Activated B cell treated with CpG ODN at 0.5 μM for 24 hours (primary cell): ENCODE measurements at regions of chr15 and their contacts with region 1.

Region 1: GRCh38 chr15:57100136-57100539 is 181.7 kb downstream of the TCF12 start:
- DNase-seq: no peak
- ATAC-seq: peak; percentile 78
- H3K4me3 Mint-ChIP-seq: peak overlapping the region; percentile 64
- H3K27ac Mint-ChIP-seq: peak overlapping the region; percentile 83
- H3K4me1 Mint-ChIP-seq: peaks cover 50% of the 10 kb centered on the region
- H3K27me3 Mint-ChIP-seq: no peaks in the 10 kb centered on the region
- CTCF ChIP-seq: no peak

Region 2: DNA sequence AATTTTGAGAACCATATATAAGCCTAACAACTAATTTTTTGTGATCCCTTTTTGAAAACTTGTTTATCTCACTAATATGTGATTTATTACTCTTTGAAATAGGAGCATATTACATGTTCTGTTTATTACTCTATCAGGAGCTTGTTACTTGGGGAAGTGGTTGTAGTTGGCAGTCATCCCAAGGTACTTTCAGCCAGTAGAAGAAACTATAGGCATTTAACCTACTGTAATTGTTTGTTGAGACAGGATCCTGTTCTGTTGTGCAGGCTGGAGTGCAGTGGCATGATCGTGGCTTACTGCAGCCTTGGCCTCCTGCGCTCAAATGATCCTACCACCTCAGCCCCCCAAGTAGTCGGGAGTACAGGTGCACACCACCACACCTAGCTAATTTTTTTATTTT is 13.9 kb after region 1 on chr15:
- CTCF ChIA-PET with region 1: no interaction called
- POLR2A ChIA-PET with region 1: interaction called, 3 read pairs
- intact Hi-C with region 1: loop called (anchors 1 kb)
- DNase-seq: no peak
- ATAC-seq: no peak
- H3K4me3 Mint-ChIP-seq: no peak overlapping the region
- H3K27ac Mint-ChIP-seq: no peak overlapping the region
- H3K4me1 Mint-ChIP-seq: peaks cover 25% of the 10 kb centered on the region
- H3K27me3 Mint-ChIP-seq: no peaks in the 10 kb centered on the region
- CTCF ChIP-seq: no peak

Region 3: DNA sequence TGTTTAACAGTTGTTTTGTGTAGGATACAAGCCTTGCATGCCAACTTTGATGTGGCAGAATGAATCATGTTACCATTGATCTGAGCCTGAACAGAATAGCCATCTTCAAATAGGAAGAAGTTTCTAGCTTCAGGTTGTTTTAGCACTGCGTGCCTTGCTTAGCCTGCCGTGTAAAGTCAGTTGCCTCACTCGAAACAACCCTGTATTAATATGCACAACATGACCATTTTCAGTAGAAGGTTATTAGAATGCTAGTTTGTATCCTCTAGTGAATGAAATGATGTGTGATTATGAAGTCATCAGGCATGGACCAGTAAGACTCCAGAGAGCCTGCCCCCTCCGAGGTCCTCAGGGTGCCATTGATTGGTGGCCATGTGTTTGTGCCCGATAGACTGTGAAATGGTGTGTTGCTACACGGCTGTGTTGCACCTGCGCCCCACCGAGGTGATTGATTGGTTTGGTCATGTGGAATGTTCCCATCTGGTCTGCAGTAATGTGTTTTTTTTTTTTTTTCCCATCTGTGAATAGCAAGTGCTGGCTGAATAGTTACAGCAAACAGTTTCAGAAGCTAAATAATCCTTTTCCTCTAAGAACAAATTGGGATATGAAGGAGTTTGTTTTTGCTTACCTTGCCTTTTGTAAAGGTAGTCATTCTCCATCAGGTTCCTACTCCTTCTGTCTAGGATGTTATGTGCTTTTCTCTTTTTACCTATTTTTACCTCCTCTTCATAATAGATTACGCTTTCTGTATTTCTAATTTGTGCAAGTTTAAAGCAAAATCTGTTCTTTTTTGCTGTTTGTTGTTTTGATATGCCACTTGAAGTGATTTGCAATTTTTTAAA is 33.2 kb after region 1 on chr15:
- CTCF ChIA-PET with region 1: no interaction called
- POLR2A ChIA-PET with region 1: no interaction called
- intact Hi-C with region 1: loop called (anchors 5 kb)
- DNase-seq: no peak
- ATAC-seq: peak; percentile 61
- H3K4me3 Mint-ChIP-seq: peak overlapping the region; percentile 12
- H3K27ac Mint-ChIP-seq: peak overlapping the region; percentile 54
- H3K4me1 Mint-ChIP-seq: peaks cover 30% of the 10 kb centered on the region
- H3K27me3 Mint-ChIP-seq: no peaks in the 10 kb centered on the region
- CTCF ChIP-seq: no peak

Region 4: DNA sequence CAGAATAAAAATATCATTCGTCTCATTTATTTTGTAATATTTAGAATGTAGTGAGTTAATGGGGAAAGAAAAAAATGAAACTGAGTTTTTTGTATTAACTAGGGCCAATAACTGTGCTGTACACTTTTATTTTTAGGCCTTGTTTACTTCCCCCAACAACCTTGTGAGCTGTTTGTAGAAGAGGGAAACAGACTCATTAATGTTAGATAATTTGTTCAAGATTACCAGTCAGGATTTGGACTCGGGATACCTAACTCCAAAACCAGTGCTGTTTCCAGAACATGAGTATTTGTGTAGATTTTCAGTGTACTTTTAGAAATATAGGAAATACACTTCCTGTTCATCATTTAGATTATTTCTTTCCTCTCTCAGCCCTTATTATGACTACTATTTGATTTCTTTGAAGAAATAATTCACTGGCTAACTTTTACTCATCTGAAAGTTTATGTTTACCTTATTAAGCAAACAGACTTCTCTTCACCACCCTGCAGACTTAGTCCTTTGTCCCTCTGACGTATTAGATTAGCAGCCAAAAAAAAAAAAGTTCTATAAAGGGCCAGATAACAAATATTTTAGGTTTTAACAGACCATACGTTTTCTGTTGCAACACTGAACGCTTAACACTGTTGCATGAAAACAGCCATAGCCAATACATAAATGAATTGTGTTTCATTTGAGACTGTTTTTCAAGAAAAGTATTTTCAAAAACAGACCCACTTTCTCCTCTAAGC is 83.6 kb after region 1 on chr15:
- CTCF ChIA-PET with region 1: no interaction called
- POLR2A ChIA-PET with region 1: no interaction called
- intact Hi-C with region 1: no loop called
- DNase-seq: no peak
- ATAC-seq: no peak
- H3K4me3 Mint-ChIP-seq: no peak overlapping the region
- H3K27ac Mint-ChIP-seq: no peak overlapping the region
- H3K4me1 Mint-ChIP-seq: peaks cover 4% of the 10 kb centered on the region
- H3K27me3 Mint-ChIP-seq: no peaks in the 10 kb centered on the region
- CTCF ChIP-seq: no peak